Calu3 (cell line): ENCODE measurements at regions of chr1 and their contacts with region 1.

Region 1: DNA sequence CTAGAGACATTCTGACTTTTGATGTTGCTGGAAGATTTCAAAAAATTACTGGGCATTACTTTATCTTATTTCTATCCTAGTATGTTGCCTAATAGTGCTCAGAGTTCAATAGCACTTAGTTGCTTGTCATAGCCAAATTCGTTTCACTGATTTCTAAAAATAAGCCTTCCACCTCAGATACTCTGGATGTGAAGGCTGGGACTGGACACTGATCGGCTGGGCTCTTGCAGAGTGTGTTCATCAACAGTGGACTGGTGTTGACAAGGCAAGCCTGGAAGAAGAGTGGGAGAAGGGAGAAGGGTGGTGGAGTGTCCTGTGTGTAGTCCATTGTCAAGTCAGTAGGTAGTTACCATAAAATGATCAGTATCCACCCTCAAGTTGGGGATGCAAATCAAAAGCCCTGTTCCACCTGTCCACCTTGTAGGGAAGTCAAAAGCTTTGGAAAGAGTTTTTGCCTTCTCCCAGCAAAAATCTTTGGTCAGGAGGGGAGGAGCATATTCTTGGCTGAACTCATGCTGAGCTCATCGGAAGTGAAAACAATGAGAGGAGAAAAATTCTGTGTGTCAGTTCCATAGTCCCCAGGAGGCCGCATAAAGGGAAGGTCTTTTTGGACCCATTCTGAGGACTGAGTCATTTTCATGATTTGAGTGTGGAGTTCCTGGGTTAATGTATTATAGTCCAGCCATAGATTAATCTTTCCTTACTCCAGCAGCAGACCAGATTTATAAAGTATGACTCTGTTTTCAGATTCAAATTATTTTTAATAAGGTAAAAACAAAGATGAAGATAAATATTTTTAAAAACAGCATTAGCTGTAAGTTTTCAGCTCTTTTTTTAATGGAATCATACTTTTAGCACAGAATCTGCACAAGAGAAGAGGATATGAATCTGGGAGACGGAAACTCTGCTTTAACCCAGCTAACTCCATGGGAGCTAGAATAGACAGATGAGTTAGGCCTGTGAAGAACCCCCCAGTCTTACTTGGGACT is 99.5 kb upstream of the BMP8A start:
- DNase-seq: peak; percentile 57
- H3K4me3 Mint-ChIP-seq: peak overlapping the region; percentile 50
- H3K27ac Mint-ChIP-seq: peak overlapping the region; percentile 94
- H3K4me1 Mint-ChIP-seq: peaks cover 73% of the 10 kb centered on the region
- H3K27me3 Mint-ChIP-seq: no peaks in the 10 kb centered on the region
- CTCF ChIP-seq: no peak

Region 2: DNA sequence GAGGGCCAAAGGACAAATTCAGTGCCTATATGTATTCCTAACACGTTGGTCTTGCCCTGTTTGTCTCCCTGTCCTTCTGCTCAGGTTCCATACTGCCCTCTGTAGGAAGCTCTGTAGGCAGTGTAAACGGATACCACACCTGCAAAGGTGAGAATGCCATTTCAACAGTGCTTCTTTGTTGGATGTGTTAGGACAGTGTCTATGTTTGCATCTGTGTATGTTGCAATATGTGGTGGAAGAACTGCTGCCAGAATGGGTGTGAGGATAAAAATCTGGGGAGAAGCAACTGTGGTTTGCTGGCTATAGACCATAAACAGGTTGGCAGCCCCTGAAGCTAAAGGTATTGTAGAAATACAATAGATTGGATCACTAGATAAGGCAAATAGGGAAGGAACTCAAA is 13.6 kb before region 1 on chr1:
- CTCF ChIA-PET with region 1: interaction called, 15 read pairs
- intact Hi-C with region 1: no loop called
- DNase-seq: peak; percentile 74
- H3K4me3 Mint-ChIP-seq: no peak overlapping the region
- H3K27ac Mint-ChIP-seq: peak overlapping the region; percentile 26
- H3K4me1 Mint-ChIP-seq: peaks cover 16% of the 10 kb centered on the region
- H3K27me3 Mint-ChIP-seq: no peaks in the 10 kb centered on the region
- CTCF ChIP-seq: peak; percentile 46

Region 3: DNA sequence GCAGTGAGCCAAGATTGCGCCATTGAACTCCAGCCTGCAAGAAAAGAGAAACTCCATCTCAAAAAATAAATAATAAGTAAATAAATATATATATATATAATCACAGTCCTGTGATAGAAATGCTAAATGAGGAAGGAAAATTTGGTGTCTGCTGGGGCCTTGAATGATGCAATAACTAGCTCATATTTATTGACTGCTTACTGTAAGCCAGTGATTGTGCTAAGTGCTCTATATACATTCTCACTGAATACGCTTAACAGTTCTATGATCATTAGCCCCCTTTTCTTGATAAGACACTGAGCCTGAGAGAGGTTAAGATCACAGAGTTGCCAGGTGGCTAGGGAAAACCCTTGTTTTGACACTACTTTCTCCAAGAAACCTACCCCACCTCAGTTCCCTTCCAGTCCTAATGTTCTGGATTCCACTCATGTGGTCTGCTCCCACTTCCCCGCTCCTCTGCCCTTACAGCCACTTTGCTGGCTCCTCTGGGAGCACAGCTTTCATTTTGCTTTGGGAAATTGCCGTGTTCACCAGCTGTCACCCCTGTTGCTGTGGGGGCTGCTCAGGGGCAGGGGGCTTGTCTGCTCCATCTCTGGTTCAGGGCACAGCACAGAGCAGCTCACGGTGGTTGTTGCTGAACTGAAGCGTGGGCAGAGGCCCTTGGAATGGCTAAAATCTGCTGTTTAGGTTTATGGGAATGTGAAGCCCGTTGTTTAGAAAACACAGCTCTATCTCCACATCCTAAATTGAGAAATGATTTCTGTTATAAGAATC is 97.0 kb after region 1 on chr1:
- CTCF ChIA-PET with region 1: no interaction called
- intact Hi-C with region 1: no loop called
- DNase-seq: no peak
- H3K4me3 Mint-ChIP-seq: no peak overlapping the region
- H3K27ac Mint-ChIP-seq: peak overlapping the region; percentile 64
- H3K4me1 Mint-ChIP-seq: no peaks in the 10 kb centered on the region
- H3K27me3 Mint-ChIP-seq: peaks cover 14% of the 10 kb centered on the region
- CTCF ChIP-seq: no peak

Region 4: DNA sequence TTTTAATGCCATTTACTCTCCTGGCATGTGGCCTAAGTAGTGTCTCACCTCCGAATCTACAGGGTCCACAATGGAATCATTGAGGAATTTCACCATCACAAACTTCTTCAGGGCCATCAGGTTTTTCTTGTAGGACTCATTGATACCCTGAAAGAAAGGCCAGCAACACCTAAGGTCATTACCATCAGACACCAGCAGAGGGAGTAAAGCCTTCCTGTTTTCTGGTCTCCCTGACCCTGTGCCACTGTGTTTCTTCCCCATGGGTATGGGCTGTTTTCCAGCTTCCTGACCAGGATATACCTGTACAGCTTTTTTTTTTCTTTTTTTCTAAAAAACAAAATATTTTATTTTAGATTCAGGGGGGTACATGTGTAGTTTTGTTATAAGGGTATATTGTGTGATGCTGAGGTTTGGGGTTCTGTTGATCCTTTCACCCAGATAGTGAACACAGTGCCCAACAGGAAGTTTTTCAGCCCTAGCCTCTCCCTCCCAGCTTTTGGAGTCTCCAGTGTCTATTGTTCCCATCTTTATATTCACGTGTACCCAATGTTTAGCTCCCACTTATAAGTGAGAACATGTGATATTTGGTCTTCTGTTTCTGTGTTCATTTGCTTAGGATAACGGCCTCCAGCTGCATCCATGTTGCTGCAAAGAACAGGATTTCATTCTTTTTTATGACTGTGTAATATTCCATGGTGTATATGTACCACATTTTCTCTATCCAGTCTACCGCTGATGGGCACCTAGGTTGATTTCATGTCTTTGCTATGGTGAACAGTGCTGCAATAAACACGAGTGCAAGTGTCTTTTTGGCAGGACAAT is 686.7 kb after region 1 on chr1:
- CTCF ChIA-PET with region 1: no interaction called
- intact Hi-C with region 1: no loop called
- DNase-seq: peak; percentile 76
- H3K4me3 Mint-ChIP-seq: no peak overlapping the region
- H3K27ac Mint-ChIP-seq: no peak overlapping the region
- H3K4me1 Mint-ChIP-seq: no peaks in the 10 kb centered on the region
- H3K27me3 Mint-ChIP-seq: no peaks in the 10 kb centered on the region
- CTCF ChIP-seq: peak; percentile 72